H1 (cell line): ENCODE measurements at regions of chr1 and their contacts with region 1.

Region 1: GRCh38 chr1:33001282-33001681 is 35.4 kb downstream of the AK2 start:
- DNase-seq: no peak
- H3K4me3 ChIP-seq: no peak overlapping the region
- H3K27ac ChIP-seq: no peak overlapping the region
- H3K4me1 ChIP-seq: peaks cover 0 to 9% (median 5%) of the 10 kb centered on the region in 4 experiments; a peak in 4 of 7 replicates
- H3K27me3 ChIP-seq: no peaks in the 10 kb centered on the region
- CTCF ChIP-seq: peak in 2 of 3 experiments; percentile 49 to 60; a peak in 3 of 4 replicates
- EP300 ChIP-seq: no peak
- POLR2A ChIP-seq: no peak
- RAD21 ChIP-seq: peak; percentile 24 to 49; a peak in 3 of 4 replicates

Region 2: DNA sequence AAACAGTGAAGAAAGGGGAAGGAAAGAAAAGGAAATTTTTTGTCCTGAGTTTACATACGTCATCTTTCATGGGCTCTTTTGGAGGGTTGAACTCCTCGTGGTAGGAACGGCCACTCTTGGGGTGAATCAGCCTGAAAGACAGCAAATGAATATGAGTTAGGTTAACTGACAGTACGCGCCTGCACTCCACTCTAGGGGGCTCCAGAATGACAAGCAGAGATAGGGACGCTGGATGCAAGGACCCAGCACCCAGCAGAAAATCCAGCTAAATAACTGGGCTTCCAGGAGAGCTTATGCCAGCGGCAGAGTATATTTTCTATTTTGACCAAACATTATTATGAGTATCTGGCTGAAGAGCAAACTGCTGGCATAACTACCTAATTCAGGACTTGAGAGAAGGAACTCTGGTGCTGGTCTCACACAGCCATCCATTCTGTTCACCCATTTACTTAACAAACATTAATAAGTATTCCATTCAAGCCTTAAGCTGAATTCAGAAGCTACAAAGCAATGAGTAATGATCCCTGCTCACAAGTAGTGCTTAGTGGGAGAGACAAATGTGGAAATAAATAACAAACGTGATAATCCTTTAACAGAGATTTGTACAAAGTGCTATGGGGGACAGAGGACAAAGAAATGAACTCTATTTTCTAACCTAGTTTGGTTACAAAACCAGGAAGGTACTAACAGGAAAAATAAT is 13.3 kb after region 1 on chr1:
- CTCF ChIA-PET with region 1: interaction called, 44 read pairs
- POLR2A ChIA-PET with region 1: interaction called, 11 read pairs
- DNase-seq: no peak
- H3K4me3 ChIP-seq: no peak overlapping the region
- H3K27ac ChIP-seq: no peak overlapping the region
- H3K4me1 ChIP-seq: no peaks in the 10 kb centered on the region
- H3K27me3 ChIP-seq: no peaks in the 10 kb centered on the region
- CTCF ChIP-seq: no peak
- EP300 ChIP-seq: no peak
- POLR2A ChIP-seq: no peak
- RAD21 ChIP-seq: peak in 1 of 2 experiments; percentile 24; a peak in 1 of 4 replicates